ENCODE measurements at regions of chr22 and their contacts with region 1.

Region 1: DNA sequence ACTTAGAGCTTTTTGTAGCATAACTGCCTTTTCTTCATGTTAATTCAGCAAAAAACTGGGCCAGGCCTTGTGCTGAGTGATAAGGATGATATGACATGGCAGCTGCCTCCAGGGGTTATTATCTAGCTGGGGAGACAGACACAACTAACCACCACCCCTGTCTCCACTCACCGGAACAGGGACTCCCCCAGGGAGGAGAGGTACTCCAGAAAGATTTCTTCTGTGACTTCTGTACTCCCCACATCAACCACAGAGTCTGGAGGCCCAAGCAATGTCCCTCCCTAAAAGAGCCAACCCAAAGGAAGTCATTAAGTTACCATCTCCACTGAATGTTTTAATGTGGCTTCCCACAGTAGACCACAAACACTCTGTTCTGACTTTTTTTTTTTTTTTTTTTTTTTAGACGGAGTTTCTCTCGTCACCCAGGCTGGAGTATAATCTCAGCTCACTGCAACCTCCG is 14.3 kb upstream of the PMM1 start:
- DNase-seq: no peak
- ATAC-seq: no peak
- H3K4me3 ChIP-seq: no peak overlapping the region
- H3K27ac ChIP-seq: no peak overlapping the region
- H3K4me1 ChIP-seq: no peaks in the 10 kb centered on the region
- H3K27me3 ChIP-seq: no peaks in the 10 kb centered on the region
- CTCF ChIP-seq: no peak
- POLR2A ChIP-seq: no peak
- RAD21 ChIP-seq: no peak

Region 2: DNA sequence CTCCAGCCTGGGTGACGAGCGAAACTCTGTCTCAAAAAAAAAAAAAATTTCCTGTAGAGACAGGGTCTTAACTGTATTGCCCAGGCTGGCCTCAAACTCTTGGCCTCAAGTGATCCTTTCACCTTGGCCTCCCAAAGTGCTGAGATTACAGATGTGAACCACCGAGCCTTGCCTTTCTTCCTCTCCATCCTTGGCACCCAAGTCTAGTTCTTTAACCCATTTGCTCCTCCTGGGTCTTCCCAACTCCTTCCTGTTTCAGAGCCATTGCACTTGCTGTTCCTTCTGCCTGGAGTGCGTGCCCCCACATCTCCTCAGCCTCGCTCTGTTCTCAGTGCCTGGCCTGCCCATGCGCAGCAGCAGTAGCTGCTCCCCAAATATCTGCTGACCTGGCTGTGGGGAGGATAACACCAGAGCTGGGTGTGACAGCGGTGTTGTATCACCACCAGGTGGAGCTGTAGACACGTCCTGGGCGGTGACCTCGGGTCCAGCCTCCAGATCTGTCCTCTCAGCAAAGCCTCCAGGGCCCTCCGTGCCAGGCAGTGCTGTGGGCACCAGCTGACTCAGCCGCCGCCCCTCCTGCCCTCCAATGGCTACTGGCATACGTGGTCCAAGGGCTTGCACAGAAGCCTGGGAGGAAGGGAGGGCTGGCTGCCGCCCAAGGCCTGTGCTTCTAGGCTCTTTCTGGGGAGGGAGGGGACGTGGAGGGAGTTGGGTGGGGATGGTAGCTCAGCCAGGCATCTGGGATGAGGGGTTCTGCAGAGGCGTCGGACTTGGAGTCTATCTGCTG is 200.2 kb before region 1 on chr22:
- CTCF ChIA-PET with region 1: no interaction called
- POLR2A ChIA-PET with region 1: interaction called, 3 read pairs
- dilution Hi-C with region 1: no loop called
- in situ Hi-C with region 1: loop called (anchors 10 kb)
- intact Hi-C with region 1: no loop called
- DNase-seq: peak; percentile 78
- ATAC-seq: peak; percentile 91
- H3K4me3 ChIP-seq: no peak overlapping the region
- H3K27ac ChIP-seq: no peak overlapping the region
- H3K4me1 ChIP-seq: peaks cover 13% of the 10 kb centered on the region
- H3K27me3 ChIP-seq: no peaks in the 10 kb centered on the region
- CTCF ChIP-seq: peak; percentile 92
- POLR2A ChIP-seq: no peak
- RAD21 ChIP-seq: peak; percentile 94

Region 3: DNA sequence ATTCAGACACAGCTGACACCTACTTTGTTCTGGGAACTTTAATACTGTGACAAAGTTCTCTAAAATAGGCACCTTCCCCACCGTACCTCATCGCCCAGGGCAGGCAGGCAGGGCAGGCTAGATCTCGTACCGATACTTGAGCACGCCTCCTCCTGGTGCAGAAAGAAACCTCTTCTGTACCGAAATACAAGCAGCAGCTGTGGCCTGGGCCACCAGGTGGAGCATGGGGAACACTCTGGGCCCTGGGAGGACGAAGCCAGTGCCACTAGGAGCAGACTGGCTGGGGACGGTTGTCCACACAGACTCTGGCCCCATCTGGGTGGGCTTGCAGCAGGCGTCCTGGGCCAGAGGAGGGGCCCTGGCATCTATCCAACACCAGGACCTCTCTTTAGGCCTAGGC is 27.0 kb before region 1 on chr22:
- CTCF ChIA-PET with region 1: no interaction called
- POLR2A ChIA-PET with region 1: no interaction called
- dilution Hi-C with region 1: no loop called
- in situ Hi-C with region 1: no loop called
- intact Hi-C with region 1: no loop called
- DNase-seq: peak; percentile 52
- ATAC-seq: peak; percentile 52
- H3K4me3 ChIP-seq: no peak overlapping the region
- H3K27ac ChIP-seq: no peak overlapping the region
- H3K4me1 ChIP-seq: peaks cover 7% of the 10 kb centered on the region; the same call in 1 of the 2 replicates
- H3K27me3 ChIP-seq: no peaks in the 10 kb centered on the region
- CTCF ChIP-seq: peak; percentile 64
- POLR2A ChIP-seq: no peak
- RAD21 ChIP-seq: peak; percentile 59

Region 4: DNA sequence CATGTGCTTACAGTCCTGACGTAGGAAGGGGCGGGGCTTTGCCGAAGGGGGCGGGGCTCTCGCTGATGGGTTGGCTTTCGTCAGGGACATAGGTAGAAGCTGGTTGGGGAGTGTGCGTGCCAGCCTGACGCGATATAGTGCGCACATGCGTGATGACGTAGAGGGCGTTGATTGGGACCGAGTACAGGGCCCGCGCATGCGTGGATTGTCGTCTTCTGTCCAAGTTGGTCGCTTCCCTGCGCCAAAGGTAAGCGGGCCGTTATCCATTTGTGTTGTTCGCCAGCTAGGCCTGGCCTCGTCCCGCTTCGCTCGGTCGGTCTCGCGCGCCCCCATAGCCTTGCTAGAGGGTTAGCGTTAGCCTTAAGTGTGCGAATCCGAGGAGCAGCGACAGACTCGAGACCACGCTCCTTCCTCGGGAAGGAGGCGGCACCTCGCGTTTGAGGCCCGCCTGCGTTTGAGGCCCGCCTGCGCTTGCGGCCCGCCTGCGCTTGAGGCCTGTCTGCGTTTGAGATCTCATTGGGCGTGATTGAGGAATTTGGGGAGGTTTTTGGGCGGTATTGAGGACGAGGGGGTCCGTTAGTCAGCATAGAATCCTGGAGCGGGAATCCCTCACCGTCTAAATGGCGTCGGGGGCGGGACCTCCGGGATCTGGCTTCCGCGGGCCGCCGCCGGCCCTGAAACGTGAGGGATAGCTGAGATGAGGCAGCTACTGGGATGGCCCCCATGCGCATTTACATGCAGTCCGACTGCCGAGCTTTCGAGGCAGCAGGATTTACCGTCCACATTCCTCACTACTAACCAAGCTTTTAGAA is 17.4 kb after region 1 on chr22 and contains the start of gene XRCC6:
- CTCF ChIA-PET with region 1: no interaction called
- POLR2A ChIA-PET with region 1: no interaction called
- dilution Hi-C with region 1: no loop called
- in situ Hi-C with region 1: no loop called
- intact Hi-C with region 1: no loop called
- DNase-seq: peak; percentile 100
- ATAC-seq: peak; percentile 97
- H3K4me3 ChIP-seq: peak within 1 kb of the TSS; percentile 84
- H3K27ac ChIP-seq: peak within 1 kb of the TSS; percentile 94
- H3K4me1 ChIP-seq: peaks cover 2% of the 10 kb centered on the region; the same call in 1 of the 2 replicates
- H3K27me3 ChIP-seq: no peaks in the 10 kb centered on the region
- CTCF ChIP-seq: no peak
- POLR2A ChIP-seq: peak; percentile 94
- RAD21 ChIP-seq: no peak
- total RNA-seq, gene XRCC6: 392 and 401 TPM in 2 replicates

Measured in IMR-90 (cell line).